CD4-positive, alpha-beta memory T cell (primary cell): ENCODE measurements at regions of chr15 and their contacts with region 1.

Region 1: GRCh38 chr15:73908030-73908821 is 18.0 kb upstream of the LOXL1 start:
- DNase-seq: peak; percentile 57 to 67 (median 62)
- H3K4me3 ChIP-seq: no peak overlapping the region
- H3K4me3 Mint-ChIP-seq: no peak overlapping the region
- H3K27ac ChIP-seq: no peak overlapping the region
- H3K27ac Mint-ChIP-seq: peak overlapping the region in 3 of 7 donors; percentile 63 to 85 (median 77)
- H3K4me1 ChIP-seq: no peaks in the 10 kb centered on the region
- H3K4me1 Mint-ChIP-seq: peaks cover 0 to 8% (median 3%) of the 10 kb centered on the region in 4 donors
- H3K27me3 ChIP-seq: no peaks in the 10 kb centered on the region
- H3K27me3 Mint-ChIP-seq: no peaks in the 10 kb centered on the region

Region 2: DNA sequence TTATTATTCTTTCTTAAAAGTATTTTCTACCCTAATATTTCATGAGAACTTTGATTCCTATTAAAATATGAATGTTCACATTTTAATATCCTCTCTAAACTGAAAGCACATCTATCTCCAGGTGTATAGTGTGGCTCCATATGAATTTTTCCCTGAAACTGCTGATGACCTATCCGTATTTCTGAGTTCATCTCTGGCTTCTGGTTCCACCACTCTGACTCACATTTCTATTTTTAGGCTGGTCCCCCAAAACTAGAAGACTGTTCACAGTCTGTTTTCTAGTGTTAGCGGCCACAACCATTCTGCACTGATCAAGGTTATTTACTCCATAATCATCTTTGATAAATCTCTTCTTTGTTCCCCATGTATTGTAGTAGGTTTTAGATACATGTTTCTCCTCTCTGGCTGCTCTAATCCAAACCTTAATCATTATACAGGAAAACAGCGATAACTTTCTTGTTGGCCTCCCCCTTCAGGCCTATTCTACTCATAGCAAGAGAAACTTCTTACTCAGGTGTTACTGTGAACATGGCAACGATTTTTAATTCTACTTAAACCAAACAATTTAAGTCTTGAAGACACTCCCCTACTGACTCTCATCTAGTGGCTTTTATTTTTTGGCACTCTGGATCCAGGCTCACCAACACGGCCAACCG is 1137.4 kb before region 1 on chr15:
- CTCF ChIA-PET with region 1: no interaction called
- POLR2A ChIA-PET with region 1: no interaction called
- intact Hi-C with region 1: no loop called
- DNase-seq: no peak
- H3K4me3 ChIP-seq: no peak overlapping the region
- H3K4me3 Mint-ChIP-seq: no peak overlapping the region
- H3K27ac ChIP-seq: no peak overlapping the region
- H3K27ac Mint-ChIP-seq: peak overlapping the region in 3 of 7 donors; percentile 10 to 52 (median 30)
- H3K4me1 ChIP-seq: peaks cover 10% of the 10 kb centered on the region
- H3K4me1 Mint-ChIP-seq: peaks cover 18 to 27% (median 22%) of the 10 kb centered on the region in 4 donors
- H3K27me3 ChIP-seq: no peaks in the 10 kb centered on the region
- H3K27me3 Mint-ChIP-seq: no peaks in the 10 kb centered on the region

Region 3: GRCh38 chr15:73781038-73781925 is 126.9 kb before region 1 on chr15:
- CTCF ChIA-PET with region 1: no interaction called
- POLR2A ChIA-PET with region 1: no interaction called
- intact Hi-C with region 1: no loop called
- DNase-seq: no peak
- H3K4me3 ChIP-seq: no peak overlapping the region
- H3K4me3 Mint-ChIP-seq: no peak overlapping the region
- H3K27ac ChIP-seq: no peak overlapping the region
- H3K27ac Mint-ChIP-seq: no peak overlapping the region
- H3K4me1 ChIP-seq: no peaks in the 10 kb centered on the region
- H3K4me1 Mint-ChIP-seq: no peaks in the 10 kb centered on the region
- H3K27me3 ChIP-seq: no peaks in the 10 kb centered on the region
- H3K27me3 Mint-ChIP-seq: no peaks in the 10 kb centered on the region

Region 4: GRCh38 chr15:73794443-73795133 is 113.6 kb before region 1 on chr15:
- CTCF ChIA-PET with region 1: no interaction called
- POLR2A ChIA-PET with region 1: no interaction called
- intact Hi-C with region 1: no loop called
- DNase-seq: no peak
- H3K4me3 ChIP-seq: no peak overlapping the region
- H3K4me3 Mint-ChIP-seq: no peak overlapping the region
- H3K27ac ChIP-seq: no peak overlapping the region
- H3K27ac Mint-ChIP-seq: no peak overlapping the region
- H3K4me1 ChIP-seq: no peaks in the 10 kb centered on the region
- H3K4me1 Mint-ChIP-seq: no peaks in the 10 kb centered on the region
- H3K27me3 ChIP-seq: no peaks in the 10 kb centered on the region
- H3K27me3 Mint-ChIP-seq: no peaks in the 10 kb centered on the region

Region 5: DNA sequence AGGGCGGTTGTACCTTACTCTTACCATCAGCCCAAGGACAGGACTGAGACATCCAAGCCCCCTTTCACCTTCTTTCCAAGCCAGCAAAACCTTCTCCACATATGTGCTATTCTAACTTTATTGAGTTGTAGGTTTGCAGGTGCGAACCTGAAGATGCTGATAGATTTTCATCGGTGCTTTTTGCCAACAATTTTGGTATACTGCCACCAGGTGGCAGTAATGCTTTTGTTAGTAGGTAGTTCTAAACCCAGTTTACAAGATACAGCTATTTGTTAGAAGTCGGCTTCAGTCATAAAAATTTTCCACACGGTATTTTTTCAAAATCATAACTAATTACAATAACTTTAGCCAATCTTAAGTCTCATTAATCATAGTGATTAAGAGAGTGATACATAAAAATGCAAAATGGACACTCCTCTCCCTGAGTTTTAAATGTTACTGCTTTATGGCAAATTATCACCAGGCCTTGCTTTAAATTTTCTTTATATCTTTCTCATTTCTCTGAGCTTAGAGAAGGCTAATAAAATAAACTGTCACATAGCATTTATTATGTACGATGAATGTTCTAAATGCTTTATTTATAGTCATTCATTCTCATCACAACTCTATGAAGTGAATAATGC is 34.2 kb before region 1 on chr15:
- CTCF ChIA-PET with region 1: interaction called, 85 read pairs
- POLR2A ChIA-PET with region 1: no interaction called
- intact Hi-C with region 1: loop called (anchors 1 kb)
- DNase-seq: peak in 4 of 5 donors; percentile 44 to 50 (median 46)
- H3K4me3 ChIP-seq: no peak overlapping the region
- H3K4me3 Mint-ChIP-seq: no peak overlapping the region
- H3K27ac ChIP-seq: no peak overlapping the region
- H3K27ac Mint-ChIP-seq: no peak overlapping the region
- H3K4me1 ChIP-seq: no peaks in the 10 kb centered on the region
- H3K4me1 Mint-ChIP-seq: no peaks in the 10 kb centered on the region
- H3K27me3 ChIP-seq: peaks cover 5% of the 10 kb centered on the region
- H3K27me3 Mint-ChIP-seq: peaks cover 31 to 33% of the 10 kb centered on the region in 2 donors

Region 6: GRCh38 chr15:73897441-73898261 is 10.6 kb before region 1 on chr15:
- CTCF ChIA-PET with region 1: interaction called, 12 read pairs
- POLR2A ChIA-PET with region 1: no interaction called
- intact Hi-C with region 1: no loop called
- DNase-seq: peak; percentile 51 to 60 (median 57)
- H3K4me3 ChIP-seq: no peak overlapping the region
- H3K4me3 Mint-ChIP-seq: no peak overlapping the region
- H3K27ac ChIP-seq: no peak overlapping the region
- H3K27ac Mint-ChIP-seq: no peak overlapping the region
- H3K4me1 ChIP-seq: no peaks in the 10 kb centered on the region
- H3K4me1 Mint-ChIP-seq: peaks cover 0 to 9% (median under 1%) of the 10 kb centered on the region in 4 donors
- H3K27me3 ChIP-seq: no peaks in the 10 kb centered on the region
- H3K27me3 Mint-ChIP-seq: peaks cover 0 to 2% of the 10 kb centered on the region in 2 donors

Region 7: GRCh38 chr15:73922186-73923151 is 14.2 kb after region 1 on chr15:
- CTCF ChIA-PET with region 1: interaction called, 20 read pairs
- POLR2A ChIA-PET with region 1: interaction called, 7 read pairs
- intact Hi-C with region 1: no loop called
- DNase-seq: no peak
- H3K4me3 ChIP-seq: no peak overlapping the region
- H3K4me3 Mint-ChIP-seq: peak overlapping the region in 2 of 8 donors; percentile 13 to 23
- H3K27ac ChIP-seq: peak overlapping the region; percentile 59
- H3K27ac Mint-ChIP-seq: peak overlapping the region; percentile 52 to 93 (median 82)
- H3K4me1 ChIP-seq: peaks cover 66% of the 10 kb centered on the region
- H3K4me1 Mint-ChIP-seq: peaks cover 35 to 65% (median 51%) of the 10 kb centered on the region in 4 donors
- H3K27me3 ChIP-seq: no peaks in the 10 kb centered on the region
- H3K27me3 Mint-ChIP-seq: no peaks in the 10 kb centered on the region